BJ (cell line): ENCODE measurements at regions of chr11 and their contacts with region 1.

Region 1: GRCh38 chr11:68297812-68298658 is 14.4 kb upstream of the LRP5 start:
- DNase-seq: no peak
- H3K4me3 ChIP-seq: no peak overlapping the region
- H3K27me3 ChIP-seq: no peaks in the 10 kb centered on the region; the same call in 1 of the 2 replicates
- CTCF ChIP-seq: peak; percentile 100

Region 2: DNA sequence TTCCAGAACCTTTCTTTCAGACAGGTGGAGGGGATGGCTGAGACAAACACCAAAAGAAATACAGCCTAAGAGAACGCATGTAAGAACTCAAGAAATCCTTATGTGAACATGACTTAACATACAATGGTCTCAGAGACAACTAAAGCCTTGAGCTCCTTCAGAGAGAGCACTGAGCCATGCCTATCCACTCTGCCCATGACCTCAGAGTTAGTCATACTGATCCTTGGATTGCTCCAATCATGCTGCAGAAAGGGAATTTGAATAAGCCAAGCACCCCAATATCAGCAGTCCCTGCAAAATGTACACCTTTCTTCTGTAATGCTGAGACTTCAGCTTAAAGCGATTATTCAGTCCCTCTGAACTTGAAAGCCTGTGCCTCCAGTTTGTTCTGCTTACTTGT is 133.6 kb before region 1 on chr11:
- CTCF ChIA-PET with region 1: no interaction called
- POLR2A ChIA-PET with region 1: no interaction called
- DNase-seq: no peak
- H3K4me3 ChIP-seq: no peak overlapping the region
- H3K27me3 ChIP-seq: no peaks in the 10 kb centered on the region
- CTCF ChIP-seq: no peak

Region 3: DNA sequence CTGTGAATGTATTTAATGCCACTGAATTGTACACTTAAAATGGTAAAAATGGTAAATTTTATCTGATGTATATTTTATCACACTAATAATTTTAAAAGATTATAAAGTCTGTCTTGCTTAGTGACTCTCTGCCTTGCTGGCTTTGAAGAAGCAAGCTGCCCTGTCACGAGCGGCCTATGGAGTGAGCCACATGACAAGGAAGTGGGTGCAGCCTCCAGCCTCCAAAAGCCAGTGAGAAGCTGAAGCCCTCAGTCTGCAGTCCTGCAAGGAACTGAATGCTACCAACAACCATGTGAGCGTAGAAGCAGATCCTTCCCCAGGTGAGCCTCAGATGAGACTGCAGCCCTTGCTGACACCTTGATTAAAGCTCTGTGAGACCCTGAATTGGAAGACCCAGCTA is 46.3 kb before region 1 on chr11:
- CTCF ChIA-PET with region 1: interaction called, 93 read pairs
- POLR2A ChIA-PET with region 1: no interaction called
- DNase-seq: no peak
- H3K4me3 ChIP-seq: no peak overlapping the region
- H3K27me3 ChIP-seq: no peaks in the 10 kb centered on the region
- CTCF ChIP-seq: no peak

Region 4: DNA sequence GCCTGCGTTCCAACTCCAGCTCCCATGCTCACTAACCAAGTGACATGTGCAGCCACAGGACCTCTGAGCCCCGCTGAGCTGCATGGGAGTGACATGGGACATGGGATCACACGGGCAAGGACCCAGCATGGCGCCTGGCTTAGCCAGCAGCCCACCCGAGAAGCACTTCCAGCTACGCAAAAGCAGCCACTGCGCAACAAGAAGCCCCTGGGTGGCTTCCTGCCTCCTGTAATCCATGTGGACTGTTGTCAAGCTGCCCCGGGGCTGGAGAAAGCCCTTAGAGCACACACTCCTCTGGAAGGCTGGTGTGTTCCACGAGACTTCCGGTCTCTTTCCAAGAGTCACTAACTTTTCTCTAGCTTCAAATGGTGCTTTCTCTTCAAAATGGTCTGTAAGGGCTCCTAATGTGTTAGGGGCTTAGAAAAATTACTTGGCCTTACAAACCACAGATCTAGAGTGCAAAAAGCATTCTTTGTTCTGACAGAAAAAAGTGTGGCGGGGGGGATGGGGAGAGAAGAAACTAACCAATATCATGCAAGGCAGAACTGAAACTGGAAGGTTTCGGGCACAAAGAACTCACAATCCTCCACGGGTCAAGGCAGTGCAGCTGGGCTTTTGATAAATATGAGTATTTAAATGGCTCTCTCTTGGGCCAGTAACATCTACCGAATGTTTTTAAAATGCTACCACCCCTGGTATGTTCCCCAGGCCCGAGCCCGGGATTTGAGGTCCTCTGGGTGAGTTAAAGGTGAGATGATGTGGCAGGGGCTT is 31.7 kb before region 1 on chr11:
- CTCF ChIA-PET with region 1: interaction called, 28 read pairs
- POLR2A ChIA-PET with region 1: no interaction called
- DNase-seq: no peak
- H3K4me3 ChIP-seq: no peak overlapping the region
- H3K27me3 ChIP-seq: no peaks in the 10 kb centered on the region
- CTCF ChIP-seq: no peak

Region 5: GRCh38 chr11:68287419-68287818 is 10.6 kb before region 1 on chr11:
- CTCF ChIA-PET with region 1: interaction called, 35 read pairs
- POLR2A ChIA-PET with region 1: no interaction called
- DNase-seq: no peak
- H3K4me3 ChIP-seq: no peak overlapping the region
- H3K27me3 ChIP-seq: no peaks in the 10 kb centered on the region
- CTCF ChIP-seq: no peak

Region 6: DNA sequence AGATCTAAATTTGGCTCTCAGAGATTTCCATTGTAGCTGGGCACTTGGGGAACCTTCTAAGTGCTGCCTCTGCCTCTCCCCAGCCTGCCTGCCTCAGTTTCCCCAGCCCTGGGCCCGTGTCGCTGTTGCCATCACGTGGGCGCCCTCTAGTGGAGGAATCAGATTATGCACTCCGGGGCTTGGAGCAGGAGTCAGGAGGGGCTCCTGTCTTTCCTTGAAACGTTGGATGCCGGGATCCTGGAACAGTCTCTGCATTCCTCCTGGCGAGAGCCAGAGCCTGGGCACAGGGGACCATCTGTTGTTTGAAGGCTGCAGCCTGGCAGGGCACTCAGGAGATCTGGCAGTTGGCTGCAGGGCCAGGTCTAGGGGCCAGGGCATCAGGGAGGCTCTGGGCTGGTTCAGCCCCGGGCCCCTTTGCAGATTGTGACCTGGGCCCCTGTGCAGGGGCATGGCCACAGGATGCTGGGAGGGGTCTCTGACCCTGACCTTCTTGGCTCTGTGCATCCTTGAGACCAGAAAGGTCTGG is 86.0 kb after region 1 on chr11:
- CTCF ChIA-PET with region 1: interaction called, 32 read pairs
- POLR2A ChIA-PET with region 1: no interaction called
- DNase-seq: no peak
- H3K4me3 ChIP-seq: no peak overlapping the region
- H3K27me3 ChIP-seq: no peaks in the 10 kb centered on the region
- CTCF ChIP-seq: peak; percentile 97

Region 7: DNA sequence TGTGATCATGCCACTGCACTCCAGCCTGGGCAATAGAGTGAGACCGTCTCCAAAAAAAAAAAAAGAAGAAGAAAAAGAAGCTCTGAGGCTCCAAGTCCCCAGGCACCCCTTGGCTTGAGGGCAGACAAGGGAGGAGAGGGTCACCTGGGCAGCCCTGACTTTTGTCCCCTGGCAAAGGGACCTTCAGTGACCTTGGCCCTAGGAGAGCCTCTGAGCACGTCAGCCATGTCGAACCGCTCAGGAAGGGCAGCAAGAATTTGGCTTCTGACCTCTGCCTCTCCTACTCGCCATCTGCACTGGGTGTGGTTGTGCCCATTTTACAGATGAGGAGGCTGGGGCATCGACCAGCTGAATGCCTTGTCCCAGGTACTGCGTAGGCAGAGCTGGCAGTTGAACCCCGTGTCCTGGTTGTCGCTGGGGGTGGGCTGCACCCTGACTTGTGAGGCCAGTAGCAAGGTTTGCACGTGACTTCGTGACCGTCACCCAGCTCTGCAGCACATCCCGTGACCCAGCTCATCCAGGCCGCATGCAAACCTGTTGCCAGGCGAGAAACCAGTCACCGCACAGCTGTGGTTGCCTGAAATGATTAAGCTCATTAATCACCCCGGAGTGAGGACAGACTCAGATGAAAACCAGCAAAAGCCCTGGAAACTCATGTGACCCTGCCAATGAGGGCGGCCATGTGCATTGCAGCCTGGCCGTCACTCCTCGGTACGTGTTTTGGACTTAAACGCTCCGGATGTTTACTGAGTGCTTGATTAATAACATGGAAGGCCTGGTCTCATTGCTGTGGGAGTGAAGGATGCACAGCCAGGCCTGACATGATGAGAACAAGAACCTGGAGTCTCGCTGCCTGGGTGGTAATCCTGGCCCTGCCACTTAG is 114.8 kb after region 1 on chr11:
- CTCF ChIA-PET with region 1: no interaction called
- POLR2A ChIA-PET with region 1: no interaction called
- DNase-seq: peak; percentile 46
- H3K4me3 ChIP-seq: no peak overlapping the region
- H3K27me3 ChIP-seq: no peaks in the 10 kb centered on the region
- CTCF ChIP-seq: no peak